Activated CD4-positive, alpha-beta memory T cell treated with anti-CD3 and anti-CD28 coated beads for 36 hours (primary cell): ENCODE measurements at regions of chr16 and their contacts with region 1.

Region 1: DNA sequence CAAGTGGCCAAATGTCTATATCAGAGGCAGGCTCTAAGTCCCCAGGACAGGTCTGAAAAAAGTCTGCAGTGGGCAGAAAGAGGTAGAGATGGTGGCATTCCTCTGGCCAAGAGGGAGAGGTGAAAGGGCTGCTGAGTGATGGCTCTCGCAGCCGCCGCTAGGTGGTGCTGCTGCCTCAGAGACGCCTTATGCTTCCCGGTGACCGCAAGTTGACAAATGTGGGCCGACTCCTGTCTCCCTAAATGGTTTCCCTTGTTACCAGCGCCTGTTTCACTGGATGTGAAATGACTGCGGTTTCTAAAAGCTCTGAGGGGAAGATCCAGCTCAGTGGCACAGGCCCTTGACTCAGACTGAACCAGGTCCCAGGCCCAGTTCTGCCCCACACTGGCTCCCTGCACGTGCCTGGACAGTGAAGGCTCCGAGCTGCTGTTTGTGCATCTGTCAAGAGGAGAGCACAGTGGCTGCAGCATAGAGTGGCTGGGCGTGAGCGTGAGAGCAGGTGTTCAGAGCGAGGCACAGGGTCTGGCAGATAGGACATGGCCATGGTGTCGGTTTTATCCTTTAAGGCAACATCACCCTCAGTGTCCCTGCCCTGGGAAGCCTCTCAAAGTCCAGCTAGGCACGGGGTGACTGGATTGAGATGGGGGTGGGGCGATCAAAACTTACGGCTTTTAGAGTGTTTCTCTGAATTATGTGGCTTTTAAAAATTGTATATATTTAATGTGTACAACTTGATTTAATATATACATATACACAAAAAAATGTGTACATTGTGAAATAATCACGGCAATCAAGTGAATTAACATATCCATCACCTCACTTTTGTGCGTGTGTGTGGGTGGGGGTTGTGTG is 19.9 kb downstream of the CLEC16A start:
- DNase-seq: peak; percentile 93
- H3K4me3 Mint-ChIP-seq: peak overlapping the region; percentile 60
- H3K27ac Mint-ChIP-seq: peak overlapping the region; percentile 98
- H3K4me1 Mint-ChIP-seq: peaks cover 77% of the 10 kb centered on the region
- H3K27me3 Mint-ChIP-seq: no peaks in the 10 kb centered on the region

Region 2: DNA sequence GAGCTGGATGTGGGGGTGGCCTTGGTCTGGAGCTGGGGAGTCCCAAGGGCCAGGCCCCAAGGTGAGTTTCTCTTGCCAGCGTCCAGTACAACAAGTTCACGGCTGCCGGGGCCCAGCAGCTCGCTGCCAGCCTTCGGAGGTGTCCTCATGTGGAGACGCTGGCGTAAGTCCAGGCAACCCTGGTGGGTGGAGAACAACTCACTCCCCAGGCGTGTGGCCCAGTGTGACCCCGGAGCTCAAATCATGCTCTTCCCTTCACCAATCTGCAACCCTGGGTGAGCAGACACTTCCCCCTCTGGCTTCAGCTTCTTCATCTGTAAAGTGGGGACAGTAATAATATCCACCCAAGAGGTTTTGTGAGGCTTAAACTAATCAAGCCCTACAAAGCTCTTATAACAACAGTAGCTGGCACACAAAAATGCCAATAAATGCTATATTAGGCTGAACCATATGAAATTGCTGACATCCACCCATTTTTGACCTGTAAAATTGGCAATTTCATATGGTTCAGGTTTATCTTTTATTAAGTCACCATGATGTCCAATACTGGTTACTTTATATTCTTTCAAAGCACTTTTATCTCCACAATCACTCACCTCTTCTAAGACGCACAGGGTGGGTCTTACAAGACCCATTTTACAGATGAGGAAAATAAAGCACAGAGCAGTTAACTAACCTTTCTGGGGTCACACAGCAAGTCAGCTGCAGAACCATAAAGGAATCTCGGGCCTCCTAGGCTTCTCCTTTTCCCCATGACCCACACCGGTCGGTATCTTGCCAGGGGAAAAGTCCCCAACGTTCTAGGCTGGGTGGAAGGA is 41.7 kb before region 1 on chr16:
- CTCF ChIA-PET with region 1: no interaction called
- POLR2A ChIA-PET with region 1: no interaction called
- intact Hi-C with region 1: no loop called
- DNase-seq: no peak
- H3K4me3 Mint-ChIP-seq: no peak overlapping the region
- H3K27ac Mint-ChIP-seq: no peak overlapping the region
- H3K4me1 Mint-ChIP-seq: peaks cover 2% of the 10 kb centered on the region
- H3K27me3 Mint-ChIP-seq: no peaks in the 10 kb centered on the region

Region 3: GRCh38 chr16:10976634-10977033 is 12.4 kb after region 1 on chr16:
- CTCF ChIA-PET with region 1: interaction called, 18 read pairs
- POLR2A ChIA-PET with region 1: interaction called, 3 read pairs
- intact Hi-C with region 1: no loop called
- DNase-seq: no peak
- H3K4me3 Mint-ChIP-seq: no peak overlapping the region
- H3K27ac Mint-ChIP-seq: peak overlapping the region; percentile 25
- H3K4me1 Mint-ChIP-seq: peaks cover 29% of the 10 kb centered on the region
- H3K27me3 Mint-ChIP-seq: no peaks in the 10 kb centered on the region

Region 4: GRCh38 chr16:11076259-11077018 is 112.2 kb after region 1 on chr16:
- CTCF ChIA-PET with region 1: interaction called, 6 read pairs
- POLR2A ChIA-PET with region 1: interaction called, 7 read pairs
- intact Hi-C with region 1: loop called (anchors 1 kb)
- DNase-seq: peak; percentile 88
- H3K4me3 Mint-ChIP-seq: no peak overlapping the region
- H3K27ac Mint-ChIP-seq: peak overlapping the region; percentile 94
- H3K4me1 Mint-ChIP-seq: peaks cover 96% of the 10 kb centered on the region
- H3K27me3 Mint-ChIP-seq: no peaks in the 10 kb centered on the region

Region 5: GRCh38 chr16:11181899-11182279 is 217.6 kb after region 1 on chr16:
- CTCF ChIA-PET with region 1: no interaction called
- POLR2A ChIA-PET with region 1: no interaction called
- intact Hi-C with region 1: loop called (anchors 5 kb)
- DNase-seq: peak; percentile 63
- H3K4me3 Mint-ChIP-seq: no peak overlapping the region
- H3K27ac Mint-ChIP-seq: peak overlapping the region; percentile 86
- H3K4me1 Mint-ChIP-seq: peaks cover 46% of the 10 kb centered on the region
- H3K27me3 Mint-ChIP-seq: no peaks in the 10 kb centered on the region

Region 6: GRCh38 chr16:11263737-11264136 is 299.5 kb after region 1 on chr16:
- CTCF ChIA-PET with region 1: interaction called, 118 read pairs
- POLR2A ChIA-PET with region 1: interaction called, 4 read pairs
- intact Hi-C with region 1: no loop called
- DNase-seq: peak; percentile 83
- H3K4me3 Mint-ChIP-seq: peak overlapping the region; percentile 24
- H3K27ac Mint-ChIP-seq: peak overlapping the region; percentile 86
- H3K4me1 Mint-ChIP-seq: peaks cover 32% of the 10 kb centered on the region
- H3K27me3 Mint-ChIP-seq: no peaks in the 10 kb centered on the region

Region 7: GRCh38 chr16:11396241-11397048 is 432.2 kb after region 1 on chr16:
- CTCF ChIA-PET with region 1: interaction called, 10 read pairs
- POLR2A ChIA-PET with region 1: no interaction called
- intact Hi-C with region 1: no loop called
- DNase-seq: peak; percentile 76
- H3K4me3 Mint-ChIP-seq: no peak overlapping the region
- H3K27ac Mint-ChIP-seq: no peak overlapping the region
- H3K4me1 Mint-ChIP-seq: no peaks in the 10 kb centered on the region
- H3K27me3 Mint-ChIP-seq: no peaks in the 10 kb centered on the region

Region 8: GRCh38 chr16:11715246-11715947 is 751.1 kb after region 1 on chr16:
- CTCF ChIA-PET with region 1: interaction called, 22 read pairs
- POLR2A ChIA-PET with region 1: no interaction called
- intact Hi-C with region 1: no loop called
- DNase-seq: no peak
- H3K4me3 Mint-ChIP-seq: no peak overlapping the region
- H3K27ac Mint-ChIP-seq: no peak overlapping the region
- H3K4me1 Mint-ChIP-seq: peaks cover 14% of the 10 kb centered on the region
- H3K27me3 Mint-ChIP-seq: no peaks in the 10 kb centered on the region